ENCODE measurements at regions of chr9 and their contacts with region 1.

Region 1: GRCh38 chr9:27227192-27227591 is 69.8 kb downstream of the EQTN start:
- DNase-seq: no peak
- H3K4me3 ChIP-seq: no peak overlapping the region
- H3K27ac ChIP-seq: no peak overlapping the region
- H3K4me1 ChIP-seq: no peaks in the 10 kb centered on the region
- H3K27me3 ChIP-seq: no peaks in the 10 kb centered on the region
- CTCF ChIP-seq: no peak
- POLR2A ChIP-seq: no peak

Region 2: DNA sequence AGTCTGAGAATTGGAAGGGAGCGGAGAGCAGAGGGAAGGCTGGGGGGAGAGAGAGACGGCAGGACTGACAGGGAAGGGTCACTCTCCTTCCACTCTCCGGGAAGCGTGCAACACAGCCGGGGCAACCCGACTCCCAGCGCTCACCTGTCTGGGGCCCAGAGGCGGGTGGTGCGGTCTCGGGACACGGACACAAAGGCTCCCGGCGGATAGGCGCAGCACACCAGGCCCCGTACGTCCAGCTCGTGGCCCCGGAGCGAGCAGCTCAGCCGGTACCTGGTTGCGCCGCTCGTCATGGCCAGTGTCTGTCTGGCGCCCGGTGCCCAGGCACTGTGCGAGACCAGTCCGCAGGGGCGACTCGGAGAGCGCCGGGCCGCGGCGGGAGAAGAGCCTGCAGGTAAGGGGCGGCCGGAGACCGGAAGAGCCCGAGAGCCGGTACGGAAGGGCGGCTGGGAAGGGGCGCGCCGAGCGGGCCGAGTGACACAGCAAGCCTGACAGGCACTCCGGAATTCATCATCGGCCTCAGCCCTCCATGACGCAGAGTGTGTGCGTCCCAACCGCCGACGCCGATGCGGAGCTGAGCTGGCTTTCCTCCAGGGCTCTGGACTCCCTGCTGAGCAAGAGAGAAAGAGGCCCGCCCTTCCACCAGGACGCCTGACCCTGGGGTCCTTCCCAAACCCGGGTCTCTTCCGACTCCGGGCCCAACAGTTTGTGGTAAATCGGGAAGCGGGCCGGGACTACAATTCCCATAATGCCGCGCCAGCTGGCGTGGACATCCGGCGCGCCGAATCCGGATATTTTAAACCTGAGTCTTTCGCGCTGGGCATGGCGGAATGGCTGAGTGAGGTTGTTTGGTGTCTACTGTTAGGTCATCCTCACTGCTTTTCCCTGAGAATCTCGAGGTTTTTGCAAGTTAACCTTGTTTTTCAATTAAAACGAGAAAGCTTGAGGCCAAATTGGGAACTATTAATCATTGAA is 280.2 kb before region 1 on chr9 and contains the start of gene PLAA:
- intact Hi-C with region 1: no loop called
- DNase-seq: peak; percentile 71
- H3K4me3 ChIP-seq: peak within 1 kb of the TSS; percentile 82 to 91 (median 88)
- H3K27ac ChIP-seq: peak within 1 kb of the TSS; percentile 97 to 98 (median 98)
- H3K4me1 ChIP-seq: peaks cover 18 to 50% (median 20%) of the 10 kb centered on the region in 3 donors
- H3K27me3 ChIP-seq: no peaks in the 10 kb centered on the region
- CTCF ChIP-seq: peak in 3 of 6 experiments; percentile 18 to 35 (median 20)
- POLR2A ChIP-seq: peak in 2 of 4 donors; percentile 18 to 51
- total RNA-seq, gene PLAA: 18.0 to 27.7 (median 23.8) TPM

Region 3: DNA sequence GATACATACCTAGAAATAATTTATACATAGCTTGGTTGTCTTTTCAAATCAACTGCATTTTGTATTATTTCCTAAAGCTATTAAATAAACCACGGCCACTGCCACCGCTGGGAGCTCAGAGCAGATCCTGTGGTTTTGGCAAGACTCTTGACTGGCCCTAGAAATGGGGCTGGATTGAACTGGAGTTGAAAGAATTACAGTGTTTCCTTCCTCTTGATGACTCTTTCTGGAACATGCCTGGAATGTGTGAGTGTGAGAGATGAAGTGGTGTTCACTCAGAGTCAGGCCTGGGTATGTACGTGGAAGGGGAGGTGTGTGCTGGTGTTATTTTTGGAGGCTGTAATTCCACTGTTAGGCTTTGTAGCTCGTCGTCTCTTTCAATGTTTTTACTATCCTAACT is 72.3 kb before region 1 on chr9:
- intact Hi-C with region 1: no loop called
- DNase-seq: no peak
- H3K4me3 ChIP-seq: no peak overlapping the region
- H3K27ac ChIP-seq: no peak overlapping the region
- H3K4me1 ChIP-seq: peaks cover 0 to 31% (median 12%) of the 10 kb centered on the region in 3 donors
- H3K27me3 ChIP-seq: no peaks in the 10 kb centered on the region
- CTCF ChIP-seq: no peak
- POLR2A ChIP-seq: no peak

Region 4: GRCh38 chr9:27179245-27179865 is 47.8 kb before region 1 on chr9:
- intact Hi-C with region 1: loop called (anchors 10 kb)
- DNase-seq: no peak
- H3K4me3 ChIP-seq: no peak overlapping the region
- H3K27ac ChIP-seq: no peak overlapping the region
- H3K4me1 ChIP-seq: peaks cover 0 to 17% (median 11%) of the 10 kb centered on the region in 3 donors
- H3K27me3 ChIP-seq: no peaks in the 10 kb centered on the region
- CTCF ChIP-seq: no peak
- POLR2A ChIP-seq: no peak

Measured in esophagus squamous epithelium (tissue), 5 donors.